ENCODE measurements at regions of chr9 and their contacts with region 1.

Region 1: GRCh38 chr9:107684224-107684623 is 194.7 kb upstream of the KLF4 start:
- DNase-seq: no peak
- ATAC-seq: no peak
- H3K4me3 ChIP-seq: no peak overlapping the region
- H3K27ac ChIP-seq: peak overlapping the region in 4 of 10 donors; percentile 20 to 77 (median 48)
- H3K4me1 ChIP-seq: peaks cover 0 to 34% (median 0%) of the 10 kb centered on the region in 9 donors
- H3K27me3 ChIP-seq: no peaks in the 10 kb centered on the region
- CTCF ChIP-seq: no peak

Region 2: GRCh38 chr9:107624234-107624960 is 59.8 kb before region 1 on chr9:
- intact Hi-C with region 1: loop called in 1 of 10 experiments (anchors 10 kb)
- DNase-seq: no peak
- ATAC-seq: no peak
- H3K4me3 ChIP-seq: no peak overlapping the region
- H3K27ac ChIP-seq: no peak overlapping the region
- H3K4me1 ChIP-seq: peaks cover 0 to 5% (median 0%) of the 10 kb centered on the region in 9 donors
- H3K27me3 ChIP-seq: no peaks in the 10 kb centered on the region
- CTCF ChIP-seq: no peak

Region 3: DNA sequence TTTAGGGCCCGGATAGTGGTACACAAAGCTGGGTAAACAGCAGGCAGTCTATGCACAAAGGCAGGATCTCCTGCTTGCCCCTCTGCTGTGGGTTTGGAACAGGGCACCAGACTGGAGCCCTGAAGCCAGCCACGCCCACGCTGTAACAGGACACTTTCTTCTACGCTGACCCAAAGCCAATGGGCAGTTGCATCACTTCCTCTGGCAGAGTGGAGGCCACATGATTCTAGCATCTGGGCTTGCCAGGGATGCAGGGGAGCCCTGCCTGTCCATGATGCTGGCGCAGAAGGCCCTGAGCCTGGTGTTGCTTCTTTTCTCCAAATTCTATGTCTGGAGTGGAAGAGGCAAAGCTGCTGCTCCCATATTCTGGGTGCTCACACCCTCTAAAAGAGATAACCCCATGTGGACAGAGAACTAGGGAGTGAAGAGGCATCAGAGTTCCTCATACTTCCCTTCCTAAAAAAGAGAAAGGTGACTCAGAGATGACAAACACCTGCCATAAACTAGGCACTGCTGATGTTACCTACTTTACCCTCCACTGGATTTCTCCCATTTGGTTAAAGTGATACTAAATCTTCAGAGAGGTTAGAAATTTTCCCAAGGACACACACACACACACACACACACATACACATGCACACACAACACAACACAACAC is 65.7 kb after region 1 on chr9:
- intact Hi-C with region 1: loop called in 1 of 10 experiments (anchors 10 kb)
- DNase-seq: peak; percentile 81 to 91
- ATAC-seq: peak; percentile 88 to 96 (median 94)
- H3K4me3 ChIP-seq: no peak overlapping the region
- H3K27ac ChIP-seq: peak overlapping the region; percentile 56 to 84 (median 76)
- H3K4me1 ChIP-seq: peaks cover 7 to 52% (median 30%) of the 10 kb centered on the region in 9 donors
- H3K27me3 ChIP-seq: no peaks in the 10 kb centered on the region
- CTCF ChIP-seq: no peak

Region 4: GRCh38 chr9:108182950-108183381 is 498.7 kb after region 1 on chr9:
- intact Hi-C with region 1: no loop called
- DNase-seq: no peak
- ATAC-seq: peak in 2 of 8 donors; percentile 20 to 27
- H3K4me3 ChIP-seq: no peak overlapping the region
- H3K27ac ChIP-seq: no peak overlapping the region
- H3K4me1 ChIP-seq: peaks cover 0 to 14% (median 7%) of the 10 kb centered on the region in 9 donors
- H3K27me3 ChIP-seq: no peaks in the 10 kb centered on the region
- CTCF ChIP-seq: no peak